Left colon (tissue), 2 donors: ENCODE measurements at regions of chr1 and their contacts with region 1.

Region 1: GRCh38 chr1:73930293-73930692 is 267.7 kb downstream of the LRRIQ3 start:
- DNase-seq: no peak
- ATAC-seq: no peak

Region 2: GRCh38 chr1:73789965-73790364 is 140.3 kb before region 1 on chr1:
- intact Hi-C with region 1: no loop called
- DNase-seq: no peak
- ATAC-seq: no peak

Region 3: DNA sequence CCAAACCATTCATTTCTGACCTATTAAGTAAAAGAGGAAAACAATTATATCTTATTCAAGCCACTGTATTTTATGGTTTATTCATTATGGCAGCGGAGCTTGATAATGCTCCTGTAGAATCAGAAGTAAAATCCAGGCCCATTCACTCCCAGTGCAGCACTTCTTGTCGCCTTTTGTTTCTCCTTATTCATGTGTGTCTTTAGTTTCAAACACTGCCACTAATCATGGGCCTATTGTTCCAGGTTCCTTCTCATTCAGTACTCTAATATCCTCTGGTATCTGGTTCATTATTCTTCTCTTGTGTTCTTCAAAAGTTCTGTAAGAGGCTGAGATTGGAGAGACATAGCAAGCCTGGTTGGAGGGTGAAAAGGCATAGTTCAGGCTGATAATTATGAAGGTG is 49.4 kb after region 1 on chr1:
- intact Hi-C with region 1: loop called in 1 of 2 experiments (anchors 5 kb)
- DNase-seq: no peak
- ATAC-seq: no peak